Panc1 (cell line): ENCODE measurements at regions of chr15 and their contacts with region 1.

Region 1: GRCh38 chr15:74365611-74366440 is 1.6 kb downstream of the CYP11A1 start:
- DNase-seq: no peak
- ATAC-seq: peak; percentile 87
- H3K4me3 ChIP-seq: peak overlapping the region; percentile 42 to 49
- H3K27ac ChIP-seq: peak overlapping the region; percentile 70
- H3K4me1 ChIP-seq: peaks cover 3% of the 10 kb centered on the region; the same call in 1 of the 2 replicates
- H3K27me3 ChIP-seq: no peaks in the 10 kb centered on the region; the same call in 1 of the 2 replicates
- CTCF ChIP-seq: no peak

Region 2: DNA sequence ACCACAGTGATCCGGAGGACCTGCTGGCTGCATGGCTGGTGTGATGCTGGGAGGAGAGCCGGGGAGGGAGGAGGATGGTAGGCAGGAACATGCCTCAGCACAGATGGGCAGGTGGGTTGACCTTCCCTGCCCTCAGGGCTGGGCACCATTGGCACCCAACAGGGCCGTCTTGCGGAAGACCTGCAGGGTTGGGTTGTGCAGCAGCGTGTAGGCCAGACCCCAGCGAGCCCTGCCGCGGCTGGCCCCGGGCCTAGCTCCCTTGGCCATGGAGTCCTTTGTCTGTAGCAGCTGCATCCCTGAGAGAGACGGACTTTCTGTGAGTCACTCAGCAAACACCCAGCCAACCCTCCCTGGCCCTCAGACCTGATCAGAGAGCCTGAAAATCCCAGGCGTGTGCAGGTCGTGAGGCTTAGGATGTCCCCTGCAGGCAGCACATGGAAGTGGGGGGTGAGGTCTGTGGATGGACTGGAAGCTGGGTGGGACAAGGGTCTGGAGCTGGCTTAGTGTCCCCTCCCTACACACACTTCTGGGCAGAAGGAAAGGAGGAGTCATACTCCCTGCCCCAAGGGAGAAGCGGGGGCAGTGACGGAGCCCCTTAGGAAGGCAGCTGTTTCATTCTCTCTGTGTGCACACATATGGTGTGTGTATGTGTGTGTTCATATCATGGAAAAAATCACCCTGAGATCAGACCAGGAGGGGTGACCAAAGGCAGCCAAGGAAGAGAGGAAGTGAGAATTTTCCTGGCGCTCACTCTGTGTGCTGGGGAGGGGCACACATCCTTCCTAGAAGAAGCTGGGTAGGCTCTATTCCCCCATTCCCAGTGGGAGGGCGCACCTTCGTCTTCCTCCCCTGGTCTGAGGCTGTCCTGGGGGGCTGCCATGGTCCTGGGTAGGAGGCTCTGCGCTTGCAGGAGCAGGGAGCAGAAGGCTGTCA is 185.6 kb before region 1 on chr15:
- CTCF ChIA-PET with region 1: no interaction called
- POLR2A ChIA-PET with region 1: no interaction called
- in situ Hi-C with region 1: no loop called
- intact Hi-C with region 1: no loop called
- DNase-seq: no peak
- ATAC-seq: peak; percentile 38
- H3K4me3 ChIP-seq: no peak overlapping the region
- H3K27ac ChIP-seq: no peak overlapping the region
- H3K4me1 ChIP-seq: peaks cover 13% of the 10 kb centered on the region
- H3K27me3 ChIP-seq: no peaks in the 10 kb centered on the region
- CTCF ChIP-seq: no peak

Region 3: DNA sequence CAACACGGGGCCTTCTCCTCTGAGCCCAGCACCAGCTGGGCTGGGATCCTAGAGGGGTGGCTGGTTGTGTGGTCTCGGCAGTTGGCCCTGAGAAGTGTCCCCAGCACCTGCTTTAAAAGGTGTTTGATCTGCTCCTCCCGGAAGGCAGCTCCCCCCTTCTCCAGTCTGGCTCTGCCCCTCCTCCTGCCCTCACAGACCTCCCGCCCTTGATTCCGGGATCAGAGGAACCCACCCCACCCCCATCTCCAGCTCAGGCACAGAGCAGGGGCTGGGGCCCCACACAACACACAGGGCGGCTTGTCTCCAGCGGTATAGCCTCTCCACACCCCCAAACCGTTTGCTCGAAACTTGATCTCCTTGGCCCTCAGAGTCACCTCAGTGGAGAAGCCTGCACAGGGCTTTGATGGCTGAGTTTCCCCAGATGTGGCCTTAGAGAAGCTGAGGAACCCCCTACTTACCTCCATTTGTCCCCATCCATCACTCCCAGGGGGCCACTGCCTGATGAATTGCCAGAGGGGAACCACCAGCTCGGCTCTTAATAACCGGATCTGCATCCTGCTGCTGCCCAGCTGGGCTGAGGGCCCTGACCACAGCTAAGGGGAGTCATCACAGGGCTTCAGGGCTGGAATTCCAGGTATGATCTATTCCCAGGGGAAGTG is 156.8 kb before region 1 on chr15:
- CTCF ChIA-PET with region 1: no interaction called
- POLR2A ChIA-PET with region 1: no interaction called
- in situ Hi-C with region 1: no loop called
- intact Hi-C with region 1: no loop called
- DNase-seq: no peak
- ATAC-seq: no peak
- H3K4me3 ChIP-seq: no peak overlapping the region
- H3K27ac ChIP-seq: no peak overlapping the region
- H3K4me1 ChIP-seq: peaks cover 5% of the 10 kb centered on the region
- H3K27me3 ChIP-seq: no peaks in the 10 kb centered on the region
- CTCF ChIP-seq: no peak

Region 4: DNA sequence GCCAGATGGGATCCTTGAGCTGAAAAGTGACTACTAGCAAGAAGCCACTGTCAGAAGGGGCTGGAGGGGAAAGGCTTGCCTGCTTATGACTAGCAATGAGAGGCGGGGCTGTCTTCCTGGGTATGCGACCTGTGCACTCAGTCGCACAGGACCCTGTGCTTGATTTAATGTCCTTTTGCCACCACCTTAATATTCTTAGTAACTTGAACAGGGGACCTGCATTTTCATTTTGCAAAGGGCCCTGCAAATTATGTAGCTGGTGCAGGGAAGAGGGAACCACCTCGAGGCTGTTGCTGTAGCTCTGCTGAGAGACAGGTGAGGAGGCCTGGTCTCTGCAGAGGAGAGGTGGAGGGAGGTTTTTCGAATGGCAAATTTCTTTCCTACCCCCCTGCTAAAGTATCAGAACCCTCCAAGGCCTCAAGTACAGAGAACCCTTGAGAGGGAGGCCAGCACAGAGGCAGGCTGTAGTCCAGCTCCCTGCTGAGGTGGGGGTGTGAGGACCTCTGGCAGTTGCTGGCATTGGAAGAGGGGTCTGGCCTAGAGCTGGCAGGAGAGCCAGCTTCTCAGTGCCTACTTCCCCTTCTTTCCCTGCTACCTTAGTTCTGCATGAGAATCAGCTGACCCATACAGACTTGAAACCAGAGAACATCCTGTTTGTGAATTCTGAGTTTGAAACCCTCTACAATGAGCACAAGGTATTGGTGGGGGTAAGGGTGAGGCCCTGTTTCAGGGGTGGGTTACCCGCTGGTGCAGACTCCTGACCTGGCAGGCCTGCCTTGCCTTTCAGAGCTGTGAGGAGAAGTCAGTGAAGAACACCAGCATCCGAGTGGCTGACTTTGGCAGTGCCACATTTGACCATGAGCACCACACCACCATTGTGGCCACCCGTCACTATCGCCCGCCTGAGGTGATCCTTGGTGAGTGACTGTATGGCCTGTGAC is 261.2 kb after region 1 on chr15:
- CTCF ChIA-PET with region 1: no interaction called
- POLR2A ChIA-PET with region 1: interaction called, 11 read pairs
- in situ Hi-C with region 1: no loop called
- intact Hi-C with region 1: loop called (anchors 5 kb)
- DNase-seq: no peak
- ATAC-seq: no peak
- H3K4me3 ChIP-seq: no peak overlapping the region
- H3K27ac ChIP-seq: no peak overlapping the region
- H3K4me1 ChIP-seq: no peaks in the 10 kb centered on the region
- H3K27me3 ChIP-seq: no peaks in the 10 kb centered on the region
- CTCF ChIP-seq: no peak